Left cardiac atrium (tissue), 4 donors: ENCODE measurements at regions of chr4 and their contacts with region 1.

Region 1: DNA sequence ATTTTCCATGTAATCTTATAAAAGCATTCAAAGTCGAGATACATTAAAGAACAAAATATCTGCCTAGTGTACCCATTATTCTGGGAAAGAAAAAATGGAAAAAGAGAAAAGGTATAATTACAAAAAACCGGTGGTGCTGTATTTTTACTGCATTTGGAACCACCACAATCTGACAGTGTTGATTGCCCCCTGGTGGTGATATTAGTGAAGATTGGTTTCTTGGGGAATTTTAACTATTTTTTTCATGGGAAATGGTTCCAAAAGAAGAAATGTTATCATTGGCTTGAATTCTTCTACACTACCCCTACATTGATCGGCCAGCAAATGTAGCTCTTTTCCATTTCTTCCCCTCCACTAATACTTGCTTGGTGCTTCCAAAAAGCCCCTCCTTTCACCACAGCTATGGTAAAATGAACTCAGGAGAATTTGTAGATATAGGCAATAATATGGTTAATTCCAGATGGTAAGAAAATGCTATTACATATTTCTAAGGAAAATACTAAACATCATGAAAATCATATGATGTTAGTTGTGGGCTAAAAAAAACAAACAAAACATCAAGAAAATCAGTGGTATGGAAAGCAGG is 50.0 kb downstream of the COX18 start:
- DNase-seq: no peak
- ATAC-seq: no peak

Region 2: GRCh38 chr4:72295966-72296557 is 723.5 kb before region 1 on chr4:
- intact Hi-C with region 1: loop called in 1 of 2 experiments (anchors 10 kb)
- DNase-seq: no peak
- ATAC-seq: peak; percentile 75 to 81

Region 3: DNA sequence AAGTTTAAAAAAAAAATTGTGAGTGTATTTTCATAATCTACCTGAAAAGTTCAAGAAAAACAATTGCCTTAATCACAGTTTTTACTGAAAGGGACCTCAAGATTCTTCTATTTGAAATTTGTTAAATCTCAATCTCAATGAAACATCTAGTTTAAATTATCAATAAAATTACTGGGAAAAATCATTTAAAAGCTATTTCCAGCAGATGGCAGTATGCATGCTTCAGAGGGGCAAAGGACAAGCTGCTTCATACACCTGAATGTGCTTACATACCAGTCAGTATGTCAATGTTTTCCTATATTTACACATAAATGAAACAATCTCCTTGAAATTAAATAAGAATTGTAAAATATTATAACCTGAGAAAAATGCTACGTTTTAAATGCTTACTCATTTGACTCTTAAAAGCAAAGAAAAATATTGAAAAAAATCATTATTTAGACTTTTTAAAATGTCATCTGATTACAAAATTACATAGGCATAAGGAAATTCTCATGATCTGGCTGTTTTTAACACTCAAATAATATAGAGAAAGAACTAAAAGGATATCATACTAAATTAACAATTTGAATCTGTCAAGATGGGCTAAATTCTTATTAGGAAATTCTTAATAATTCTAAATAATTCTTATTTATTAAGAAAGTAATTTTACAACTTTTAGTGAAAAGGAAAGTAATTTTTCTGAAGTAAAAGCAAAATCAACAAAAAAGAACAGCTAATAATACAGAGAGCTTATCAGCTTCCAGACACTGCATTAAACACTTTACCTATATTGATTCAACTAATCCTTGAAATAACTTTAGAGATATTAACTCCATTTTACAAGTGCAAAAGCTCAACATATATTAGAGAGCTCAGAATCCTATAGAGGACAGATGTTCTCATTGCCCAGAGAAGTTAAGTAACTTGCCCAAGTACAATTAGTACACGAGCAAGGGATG is 692.6 kb before region 1 on chr4:
- intact Hi-C with region 1: loop called in 1 of 2 experiments (anchors 5 kb)
- DNase-seq: no peak
- ATAC-seq: no peak

Region 4: DNA sequence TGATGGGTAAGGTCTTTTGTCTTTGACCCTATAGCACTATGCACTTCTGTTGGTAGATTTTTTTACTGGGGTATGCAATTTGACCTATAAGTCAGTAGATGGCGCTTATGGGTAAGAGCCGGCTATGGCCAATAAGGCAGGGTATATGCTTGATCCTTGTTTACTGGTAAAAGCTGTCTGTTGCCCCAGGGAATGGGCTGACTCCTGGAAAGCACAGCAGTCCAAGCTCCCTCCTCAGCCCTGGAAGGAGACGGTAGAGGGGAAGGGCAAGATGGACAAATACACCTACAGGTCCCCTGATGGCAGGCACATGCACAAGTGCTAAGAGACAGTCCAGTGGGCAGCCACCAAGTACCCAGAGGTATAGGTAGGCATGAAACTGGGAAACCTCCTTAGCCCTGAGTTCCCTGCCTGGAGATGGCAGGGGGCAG is 514.2 kb before region 1 on chr4:
- intact Hi-C with region 1: loop called (anchors 2 to 10 kb)
- DNase-seq: peak; percentile 23
- ATAC-seq: peak; percentile 55 to 77

Region 5: GRCh38 chr4:72701987-72702819 is 317.4 kb before region 1 on chr4:
- intact Hi-C with region 1: loop called in 1 of 2 experiments (anchors 10 kb)
- DNase-seq: no peak
- ATAC-seq: peak in 1 of 2 donors; percentile 58

Region 6: DNA sequence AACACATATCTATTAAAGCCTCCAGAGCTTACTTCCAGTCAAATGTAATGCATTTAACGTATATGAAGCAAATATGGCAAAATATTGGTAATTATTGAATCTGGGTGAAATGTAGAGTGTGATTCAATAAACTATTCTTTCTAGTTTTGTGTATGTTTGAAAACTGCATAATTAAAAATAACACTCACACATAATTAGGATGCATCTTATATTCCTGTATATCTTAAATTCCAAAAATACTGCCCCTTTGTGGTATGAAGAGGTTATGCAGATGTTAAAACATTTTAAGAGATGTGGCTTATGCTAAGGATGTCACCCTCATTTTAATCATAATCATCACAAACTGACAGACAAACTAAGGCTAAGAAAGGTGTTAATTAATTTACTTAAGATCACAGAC is 133.0 kb before region 1 on chr4:
- intact Hi-C with region 1: no loop called
- DNase-seq: no peak
- ATAC-seq: no peak